Activated naive CD4-positive, alpha-beta T cell treated with anti-CD3 and anti-CD28 coated beads for 36 hours (primary cell): ENCODE measurements at regions of chr18 and their contacts with region 1.

Region 1: DNA sequence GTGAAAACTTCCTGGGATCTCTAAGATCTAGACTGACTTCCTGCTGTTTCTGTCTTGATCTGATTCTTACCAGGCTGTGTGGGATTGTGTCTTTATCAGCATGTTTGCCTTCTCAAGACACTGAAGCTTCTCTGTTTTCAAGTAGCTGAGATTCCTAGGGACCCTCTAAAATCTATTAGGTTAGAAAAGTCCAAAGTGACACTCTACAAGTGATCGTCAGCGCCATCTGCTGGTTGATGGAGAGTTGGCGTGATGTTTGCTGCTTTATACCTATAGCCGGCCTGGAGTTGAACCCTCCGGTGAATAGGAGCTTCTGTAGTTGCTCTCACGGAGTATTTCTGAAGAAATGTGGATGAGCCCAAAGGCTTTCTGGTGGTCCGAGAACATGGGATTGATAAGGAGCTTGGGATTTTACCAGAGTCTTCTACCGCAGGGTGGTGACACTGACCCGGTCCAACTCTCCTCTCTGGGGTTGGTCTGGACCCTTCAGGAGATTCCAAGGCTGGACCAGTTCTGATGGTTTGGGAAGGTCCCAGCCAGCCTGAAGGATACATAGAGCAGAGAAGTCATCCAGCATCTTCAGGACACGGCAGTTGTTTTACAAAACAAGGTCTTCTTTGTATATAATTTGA is 96.0 kb upstream of the TTC39C start:
- DNase-seq: peak; percentile 91
- H3K4me3 Mint-ChIP-seq: no peak overlapping the region
- H3K27ac Mint-ChIP-seq: no peak overlapping the region
- H3K4me1 Mint-ChIP-seq: peaks cover 11% of the 10 kb centered on the region
- H3K27me3 Mint-ChIP-seq: no peaks in the 10 kb centered on the region

Region 2: GRCh38 chr18:23330423-23330822 is 588.1 kb before region 1 on chr18:
- CTCF ChIA-PET with region 1: no interaction called
- intact Hi-C with region 1: no loop called
- DNase-seq: no peak
- H3K4me3 Mint-ChIP-seq: no peak overlapping the region
- H3K27ac Mint-ChIP-seq: no peak overlapping the region
- H3K4me1 Mint-ChIP-seq: no peaks in the 10 kb centered on the region
- H3K27me3 Mint-ChIP-seq: no peaks in the 10 kb centered on the region

Region 3: DNA sequence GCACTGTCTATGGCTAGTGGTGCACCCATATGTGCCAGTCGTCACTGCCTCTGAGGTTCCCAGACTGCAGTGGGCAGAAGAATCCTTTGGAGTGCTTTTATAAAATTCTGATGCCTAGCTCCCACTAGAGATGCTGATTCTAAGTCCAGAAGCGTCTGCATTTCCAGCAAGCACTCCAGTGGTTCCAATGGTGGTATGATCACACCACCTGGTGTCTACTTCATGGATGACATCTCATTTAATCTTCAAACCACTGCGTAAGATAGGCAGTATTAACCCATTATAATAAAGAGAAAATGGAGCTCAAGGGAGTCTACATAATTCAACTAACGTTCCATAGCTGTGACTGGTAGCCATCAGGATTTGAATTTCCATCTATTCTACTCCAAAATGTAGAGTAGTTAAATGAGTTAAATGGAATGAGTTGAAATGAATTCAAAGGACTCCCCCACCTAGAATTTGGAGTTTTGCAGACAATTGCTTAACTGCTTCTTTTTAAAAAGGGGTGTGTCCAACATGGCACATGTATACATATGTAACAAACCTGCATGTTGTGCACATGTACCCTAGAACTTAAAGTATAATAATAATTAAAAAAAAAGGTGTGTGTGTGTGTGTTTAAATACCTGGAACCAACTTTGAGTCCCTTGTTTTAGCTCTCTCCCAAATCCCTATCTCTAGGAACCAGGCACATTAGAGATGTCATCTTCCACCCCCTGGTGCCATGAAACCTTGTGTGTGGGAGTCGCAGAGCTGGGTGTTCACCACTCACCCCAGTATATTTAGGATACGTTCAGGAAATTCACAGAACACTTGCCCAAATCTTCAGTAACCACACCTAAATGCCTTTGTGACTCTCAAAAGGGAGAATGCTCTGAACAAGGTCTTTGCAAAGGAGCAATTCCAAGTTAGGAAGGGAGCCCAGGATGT is 215.2 kb before region 1 on chr18:
- CTCF ChIA-PET with region 1: no interaction called
- intact Hi-C with region 1: loop called (anchors 5 kb)
- DNase-seq: peak; percentile 26
- H3K4me3 Mint-ChIP-seq: no peak overlapping the region
- H3K27ac Mint-ChIP-seq: no peak overlapping the region
- H3K4me1 Mint-ChIP-seq: no peaks in the 10 kb centered on the region
- H3K27me3 Mint-ChIP-seq: peaks cover 8% of the 10 kb centered on the region

Region 4: DNA sequence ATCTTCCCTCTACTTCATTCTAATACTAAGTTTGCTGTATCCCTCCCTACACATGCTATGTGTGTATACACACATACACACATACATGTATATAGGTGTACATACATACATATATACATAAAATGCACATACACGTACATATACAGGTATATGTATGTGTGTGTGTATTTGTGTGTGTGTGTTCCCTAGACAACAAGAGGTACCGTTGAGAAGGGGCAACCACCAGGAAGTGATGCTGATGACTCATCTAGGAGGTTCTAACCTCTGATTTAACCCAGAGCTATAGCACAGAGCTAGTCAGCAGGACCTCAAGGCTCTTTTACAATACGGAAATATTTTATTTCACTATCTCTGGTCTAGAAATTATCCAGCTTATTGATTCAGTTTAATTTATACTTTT is 90.1 kb before region 1 on chr18:
- CTCF ChIA-PET with region 1: interaction called, 32 read pairs
- intact Hi-C with region 1: loop called (anchors 1 kb)
- DNase-seq: peak; percentile 61
- H3K4me3 Mint-ChIP-seq: no peak overlapping the region
- H3K27ac Mint-ChIP-seq: no peak overlapping the region
- H3K4me1 Mint-ChIP-seq: peaks cover 37% of the 10 kb centered on the region
- H3K27me3 Mint-ChIP-seq: no peaks in the 10 kb centered on the region

Region 5: GRCh38 chr18:23900994-23901393 is 17.5 kb before region 1 on chr18:
- CTCF ChIA-PET with region 1: interaction called, 17 read pairs
- intact Hi-C with region 1: no loop called
- DNase-seq: peak; percentile 8
- H3K4me3 Mint-ChIP-seq: no peak overlapping the region
- H3K27ac Mint-ChIP-seq: no peak overlapping the region
- H3K4me1 Mint-ChIP-seq: peaks cover 6% of the 10 kb centered on the region
- H3K27me3 Mint-ChIP-seq: peaks cover 2% of the 10 kb centered on the region

Region 6: GRCh38 chr18:24014062-24014985 is 95.8 kb after region 1 on chr18 and contains the start of gene TTC39C:
- CTCF ChIA-PET with region 1: no interaction called
- intact Hi-C with region 1: loop called (anchors 2 kb)
- DNase-seq: peak; percentile 87
- H3K4me3 Mint-ChIP-seq: peak within 1 kb of the TSS; percentile 91
- H3K27ac Mint-ChIP-seq: peak within 1 kb of the TSS; percentile 89
- H3K4me1 Mint-ChIP-seq: peaks cover 69% of the 10 kb centered on the region
- H3K27me3 Mint-ChIP-seq: no peaks in the 10 kb centered on the region
- total RNA-seq, gene TTC39C: 39.9 to 44.2 TPM

Region 7: DNA sequence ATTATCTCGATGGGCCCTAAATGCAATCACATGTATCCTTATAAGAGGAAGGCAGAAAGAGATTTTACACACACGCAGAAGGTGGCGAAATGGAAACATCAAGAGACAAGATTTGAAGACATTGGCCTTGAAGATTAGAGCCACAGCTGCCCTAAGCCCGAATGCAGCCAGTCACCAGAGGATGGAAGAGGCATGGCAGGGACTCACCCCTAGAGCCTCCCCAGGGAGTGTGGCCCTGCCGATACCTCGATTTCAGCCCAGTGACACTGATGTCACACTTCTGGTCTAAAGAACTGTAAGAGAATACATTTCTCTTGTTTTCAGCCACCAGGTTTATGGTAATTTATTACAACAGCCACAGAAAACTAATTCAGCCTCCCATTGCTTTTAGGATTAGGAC is 113.4 kb after region 1 on chr18:
- CTCF ChIA-PET with region 1: no interaction called
- intact Hi-C with region 1: no loop called
- DNase-seq: no peak
- H3K4me3 Mint-ChIP-seq: no peak overlapping the region
- H3K27ac Mint-ChIP-seq: no peak overlapping the region
- H3K4me1 Mint-ChIP-seq: peaks cover 66% of the 10 kb centered on the region
- H3K27me3 Mint-ChIP-seq: no peaks in the 10 kb centered on the region